ENCODE measurements at regions of chr11 and their contacts with region 1.

Region 1: GRCh38 chr11:62081378-62082291 is 42.2 kb upstream of the INCENP start:
- DNase-seq: peak; percentile 82
- ATAC-seq: peak; percentile 67
- H3K4me3 Mint-ChIP-seq: peak overlapping the region; percentile 36
- H3K27ac Mint-ChIP-seq: no peak overlapping the region
- H3K4me1 Mint-ChIP-seq: peaks cover 8% of the 10 kb centered on the region
- H3K27me3 Mint-ChIP-seq: no peaks in the 10 kb centered on the region

Region 2: GRCh38 chr11:61871158-61871597 is 210.5 kb before region 1 on chr11:
- CTCF ChIA-PET with region 1: interaction called, 48 read pairs
- POLR2A ChIA-PET with region 1: no interaction called
- DNase-seq: peak; percentile 77
- ATAC-seq: peak; percentile 94
- H3K4me3 Mint-ChIP-seq: peak overlapping the region; percentile 54
- H3K27ac Mint-ChIP-seq: peak overlapping the region; percentile 61
- H3K4me1 Mint-ChIP-seq: peaks cover 8% of the 10 kb centered on the region
- H3K27me3 Mint-ChIP-seq: no peaks in the 10 kb centered on the region

Region 3: GRCh38 chr11:61899146-61899841 is 182.3 kb before region 1 on chr11:
- CTCF ChIA-PET with region 1: interaction called, 337 read pairs
- POLR2A ChIA-PET with region 1: interaction called, 3 read pairs
- DNase-seq: peak; percentile 94
- ATAC-seq: peak; percentile 92
- H3K4me3 Mint-ChIP-seq: no peak overlapping the region
- H3K27ac Mint-ChIP-seq: peak overlapping the region; percentile 45
- H3K4me1 Mint-ChIP-seq: peaks cover 7% of the 10 kb centered on the region
- H3K27me3 Mint-ChIP-seq: peaks cover 4% of the 10 kb centered on the region

Region 4: DNA sequence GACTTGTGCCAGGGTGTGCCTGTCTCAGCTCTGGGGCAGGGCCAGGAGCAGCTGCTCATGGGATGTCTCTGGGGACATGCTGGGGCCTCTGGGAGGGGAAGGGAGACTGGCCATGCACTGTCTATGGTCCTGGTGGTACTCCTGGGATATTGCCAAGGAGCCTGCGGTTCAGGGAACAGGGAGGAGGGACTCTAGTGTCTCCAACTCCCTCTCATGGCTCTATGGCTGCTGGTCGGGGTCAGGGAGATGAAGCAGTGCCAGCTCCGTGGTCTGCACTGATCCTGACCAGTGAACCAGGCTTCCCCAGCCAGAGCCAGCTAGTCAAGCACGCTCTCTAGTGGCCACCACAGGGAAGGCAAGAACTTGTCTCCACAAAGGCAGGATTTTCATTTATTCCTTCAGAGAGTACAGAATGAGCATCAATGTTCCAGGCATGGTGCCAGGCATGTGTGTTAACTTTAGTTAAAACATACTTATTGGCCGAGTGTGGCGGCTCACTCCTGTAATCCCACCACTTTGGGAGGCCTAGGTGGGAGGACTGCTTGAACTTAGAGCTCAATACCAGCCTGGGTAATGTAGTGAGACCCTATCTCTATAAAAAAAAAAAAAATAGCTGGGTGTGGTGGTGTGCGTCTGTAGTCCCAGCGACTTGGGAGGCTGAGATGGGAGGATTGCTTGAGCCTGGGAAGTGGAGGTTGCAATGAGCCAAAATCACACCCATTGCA is 134.0 kb before region 1 on chr11:
- CTCF ChIA-PET with region 1: interaction called, 114 read pairs
- POLR2A ChIA-PET with region 1: no interaction called
- DNase-seq: peak; percentile 77
- ATAC-seq: peak; percentile 83
- H3K4me3 Mint-ChIP-seq: no peak overlapping the region
- H3K27ac Mint-ChIP-seq: no peak overlapping the region
- H3K4me1 Mint-ChIP-seq: no peaks in the 10 kb centered on the region
- H3K27me3 Mint-ChIP-seq: peaks cover 8% of the 10 kb centered on the region

Region 5: DNA sequence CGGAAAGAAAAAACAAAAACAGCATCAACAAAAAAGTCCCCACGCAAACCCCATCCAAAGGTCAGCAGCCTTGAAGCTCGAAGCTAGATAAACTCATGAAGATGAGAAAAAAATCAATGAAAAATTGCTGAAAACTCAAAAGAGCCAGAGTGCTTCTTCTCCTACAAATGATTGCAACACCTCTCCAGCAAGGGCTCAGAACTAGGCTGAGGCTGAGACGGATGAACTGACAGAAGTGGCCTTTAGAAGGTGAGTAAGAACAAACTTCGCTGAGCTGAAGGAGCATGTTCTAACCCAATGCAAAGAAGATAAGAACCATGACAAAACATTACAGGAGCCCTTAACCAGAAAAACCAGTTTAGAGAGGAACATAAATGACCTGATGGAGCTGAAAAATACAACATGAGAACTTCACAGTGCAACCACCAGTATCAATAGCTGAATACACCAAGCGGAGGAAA is 95.7 kb before region 1 on chr11:
- CTCF ChIA-PET with region 1: interaction called, 16 read pairs
- POLR2A ChIA-PET with region 1: interaction called, 3 read pairs
- DNase-seq: no peak
- ATAC-seq: no peak
- H3K4me3 Mint-ChIP-seq: no peak overlapping the region
- H3K27ac Mint-ChIP-seq: no peak overlapping the region
- H3K4me1 Mint-ChIP-seq: peaks cover 2% of the 10 kb centered on the region
- H3K27me3 Mint-ChIP-seq: peaks cover 28% of the 10 kb centered on the region

Region 6: DNA sequence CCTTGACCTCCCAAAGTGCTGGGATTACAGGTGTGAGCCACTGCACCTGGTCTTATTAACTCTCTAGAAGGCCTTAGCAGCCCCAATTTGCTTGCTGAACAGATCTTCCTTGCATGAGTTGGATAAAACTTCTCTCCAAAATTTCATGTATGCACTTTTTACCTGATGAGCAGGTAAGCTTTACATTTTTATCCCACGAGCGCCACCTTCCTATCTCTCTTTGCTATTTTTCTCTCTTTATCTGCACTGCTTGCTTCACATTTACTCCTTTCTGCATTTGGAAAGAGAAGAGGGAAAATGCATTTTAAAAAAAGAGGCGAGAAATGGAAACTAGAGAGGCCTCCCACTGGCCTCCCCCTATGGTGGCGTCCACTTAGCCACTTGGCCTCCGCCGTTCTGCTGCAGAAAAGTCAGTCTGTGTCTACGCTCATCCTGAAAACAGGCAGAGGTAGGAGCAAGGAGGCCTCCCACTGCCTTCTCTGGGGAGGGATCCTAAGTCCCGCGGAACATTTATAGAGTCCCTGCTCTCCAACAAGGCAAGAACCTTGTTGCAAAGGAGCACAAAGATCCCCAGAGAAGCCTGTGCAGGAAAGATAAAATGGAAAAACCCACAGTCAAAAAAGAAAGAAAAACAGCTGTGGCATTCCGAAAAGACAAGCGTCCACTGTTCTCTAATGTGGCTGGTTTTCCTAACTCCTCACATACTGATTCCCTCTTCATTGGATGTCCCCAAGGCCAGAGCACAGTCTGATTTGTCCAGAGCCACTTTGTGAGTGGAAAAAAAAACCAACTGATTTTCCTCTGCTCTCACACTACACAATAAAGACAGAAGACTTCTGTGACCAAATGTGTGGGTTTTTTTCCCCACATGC is 20.0 kb before region 1 on chr11:
- CTCF ChIA-PET with region 1: interaction called, 15 read pairs
- POLR2A ChIA-PET with region 1: no interaction called
- DNase-seq: no peak
- ATAC-seq: no peak
- H3K4me3 Mint-ChIP-seq: no peak overlapping the region
- H3K27ac Mint-ChIP-seq: no peak overlapping the region
- H3K4me1 Mint-ChIP-seq: no peaks in the 10 kb centered on the region
- H3K27me3 Mint-ChIP-seq: no peaks in the 10 kb centered on the region

Measured in activated CD8-positive, alpha-beta T cell treated with anti-CD3 and anti-CD28 coated beads, Interleukin-2, amount 10 ng/mL, durations not matched to agents 7 days and 5 days (primary cell).